MCF 10A (cell line): ENCODE measurements at regions of chr4 and their contacts with region 1.

Region 1: GRCh38 chr4:147866532-147867271 is 134.8 kb downstream of the ARHGAP10 start:
- DNase-seq: peak; percentile 93
- H3K4me3 Mint-ChIP-seq: no peak overlapping the region
- H3K27ac Mint-ChIP-seq: peak overlapping the region; percentile 75
- H3K4me1 Mint-ChIP-seq: no peaks in the 10 kb centered on the region
- H3K27me3 Mint-ChIP-seq: no peaks in the 10 kb centered on the region
- CTCF ChIP-seq: peak; percentile 98

Region 2: GRCh38 chr4:147111033-147111367 is 755.7 kb before region 1 on chr4:
- CTCF ChIA-PET with region 1: no interaction called
- POLR2A ChIA-PET with region 1: no interaction called
- intact Hi-C with region 1: loop called (anchors 5 kb)
- DNase-seq: no peak
- H3K4me3 Mint-ChIP-seq: no peak overlapping the region
- H3K27ac Mint-ChIP-seq: no peak overlapping the region
- H3K4me1 Mint-ChIP-seq: no peaks in the 10 kb centered on the region
- H3K27me3 Mint-ChIP-seq: no peaks in the 10 kb centered on the region
- CTCF ChIP-seq: peak; percentile 8

Region 3: DNA sequence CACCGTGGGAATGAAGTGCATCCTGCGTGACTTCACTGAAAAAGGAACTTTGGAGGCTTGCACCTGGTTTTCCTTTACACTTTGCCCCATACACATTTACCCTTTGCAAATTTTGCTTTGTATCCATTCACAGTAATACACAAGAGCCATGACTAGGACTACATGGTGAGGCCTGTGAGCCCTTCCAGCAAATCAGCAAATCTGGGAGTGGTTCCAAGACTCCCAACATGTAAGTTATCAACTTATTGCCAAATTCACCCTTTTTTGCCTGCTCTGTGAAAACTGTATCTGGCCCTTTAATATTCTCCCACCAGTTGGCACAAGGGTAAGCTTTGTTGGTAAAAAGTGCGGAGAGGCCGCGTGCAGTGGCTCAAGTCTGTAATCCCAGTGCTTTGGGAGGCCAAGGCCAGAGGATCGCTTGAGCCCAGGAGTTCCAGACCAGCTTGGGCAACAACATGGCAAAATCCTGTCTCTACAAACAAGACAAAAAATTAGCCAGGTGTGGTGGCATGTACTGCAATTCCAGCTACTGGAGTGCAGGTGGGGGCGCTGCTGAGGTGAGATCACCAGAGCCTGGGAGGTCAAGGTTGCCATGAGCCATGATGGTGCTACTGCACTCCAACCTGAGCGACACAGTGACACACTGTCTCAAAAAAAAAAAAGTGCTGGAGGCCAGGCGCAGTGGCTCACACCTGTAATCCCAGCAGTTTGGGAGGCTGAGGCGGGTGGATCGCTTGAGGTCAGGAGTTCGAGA is 187.7 kb before region 1 on chr4:
- CTCF ChIA-PET with region 1: interaction called, 19 read pairs
- POLR2A ChIA-PET with region 1: interaction called, 16 read pairs
- intact Hi-C with region 1: no loop called
- DNase-seq: peak; percentile 11
- H3K4me3 Mint-ChIP-seq: no peak overlapping the region
- H3K27ac Mint-ChIP-seq: no peak overlapping the region
- H3K4me1 Mint-ChIP-seq: peaks cover 11% of the 10 kb centered on the region
- H3K27me3 Mint-ChIP-seq: no peaks in the 10 kb centered on the region
- CTCF ChIP-seq: no peak

Region 4: GRCh38 chr4:147714575-147715401 is 151.9 kb before region 1 on chr4:
- CTCF ChIA-PET with region 1: interaction called, 247 read pairs
- POLR2A ChIA-PET with region 1: interaction called, 12 read pairs
- intact Hi-C with region 1: no loop called
- DNase-seq: peak; percentile 68
- H3K4me3 Mint-ChIP-seq: no peak overlapping the region
- H3K27ac Mint-ChIP-seq: no peak overlapping the region
- H3K4me1 Mint-ChIP-seq: no peaks in the 10 kb centered on the region
- H3K27me3 Mint-ChIP-seq: no peaks in the 10 kb centered on the region
- CTCF ChIP-seq: no peak

Region 5: GRCh38 chr4:147768113-147768512 is 98.6 kb before region 1 on chr4:
- CTCF ChIA-PET with region 1: interaction called, 24 read pairs
- POLR2A ChIA-PET with region 1: no interaction called
- intact Hi-C with region 1: no loop called
- DNase-seq: peak; percentile 57
- H3K4me3 Mint-ChIP-seq: no peak overlapping the region
- H3K27ac Mint-ChIP-seq: no peak overlapping the region
- H3K4me1 Mint-ChIP-seq: peaks cover 34% of the 10 kb centered on the region
- H3K27me3 Mint-ChIP-seq: no peaks in the 10 kb centered on the region
- CTCF ChIP-seq: no peak

Region 6: DNA sequence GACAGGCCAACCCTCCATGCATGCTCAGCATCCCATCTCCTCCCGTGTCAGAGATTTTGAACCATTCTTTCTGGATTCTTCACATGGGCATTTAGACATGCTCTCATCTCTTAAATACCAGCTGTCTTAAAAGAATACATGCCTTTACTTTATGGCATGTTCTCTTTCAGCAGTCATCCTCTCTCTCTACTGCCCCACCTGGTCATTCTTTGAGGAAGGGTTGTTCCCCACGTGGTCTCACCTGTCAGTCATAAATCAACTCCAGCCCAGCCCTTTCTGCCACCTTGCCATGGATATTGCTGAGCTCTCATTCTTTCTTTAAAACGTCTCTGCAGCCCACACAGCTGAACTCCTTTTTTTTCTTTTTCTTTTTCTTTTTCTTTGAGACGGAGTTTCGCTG is 23.5 kb before region 1 on chr4:
- CTCF ChIA-PET with region 1: interaction called, 126 read pairs
- POLR2A ChIA-PET with region 1: interaction called, 3 read pairs
- intact Hi-C with region 1: no loop called
- DNase-seq: peak; percentile 66
- H3K4me3 Mint-ChIP-seq: no peak overlapping the region
- H3K27ac Mint-ChIP-seq: no peak overlapping the region
- H3K4me1 Mint-ChIP-seq: no peaks in the 10 kb centered on the region
- H3K27me3 Mint-ChIP-seq: no peaks in the 10 kb centered on the region
- CTCF ChIP-seq: peak; percentile 18

Region 7: GRCh38 chr4:147991543-147992283 is 125.0 kb after region 1 on chr4:
- CTCF ChIA-PET with region 1: no interaction called
- POLR2A ChIA-PET with region 1: no interaction called
- intact Hi-C with region 1: no loop called
- DNase-seq: no peak
- H3K4me3 Mint-ChIP-seq: no peak overlapping the region
- H3K27ac Mint-ChIP-seq: no peak overlapping the region
- H3K4me1 Mint-ChIP-seq: no peaks in the 10 kb centered on the region
- H3K27me3 Mint-ChIP-seq: no peaks in the 10 kb centered on the region
- CTCF ChIP-seq: no peak

Region 8: DNA sequence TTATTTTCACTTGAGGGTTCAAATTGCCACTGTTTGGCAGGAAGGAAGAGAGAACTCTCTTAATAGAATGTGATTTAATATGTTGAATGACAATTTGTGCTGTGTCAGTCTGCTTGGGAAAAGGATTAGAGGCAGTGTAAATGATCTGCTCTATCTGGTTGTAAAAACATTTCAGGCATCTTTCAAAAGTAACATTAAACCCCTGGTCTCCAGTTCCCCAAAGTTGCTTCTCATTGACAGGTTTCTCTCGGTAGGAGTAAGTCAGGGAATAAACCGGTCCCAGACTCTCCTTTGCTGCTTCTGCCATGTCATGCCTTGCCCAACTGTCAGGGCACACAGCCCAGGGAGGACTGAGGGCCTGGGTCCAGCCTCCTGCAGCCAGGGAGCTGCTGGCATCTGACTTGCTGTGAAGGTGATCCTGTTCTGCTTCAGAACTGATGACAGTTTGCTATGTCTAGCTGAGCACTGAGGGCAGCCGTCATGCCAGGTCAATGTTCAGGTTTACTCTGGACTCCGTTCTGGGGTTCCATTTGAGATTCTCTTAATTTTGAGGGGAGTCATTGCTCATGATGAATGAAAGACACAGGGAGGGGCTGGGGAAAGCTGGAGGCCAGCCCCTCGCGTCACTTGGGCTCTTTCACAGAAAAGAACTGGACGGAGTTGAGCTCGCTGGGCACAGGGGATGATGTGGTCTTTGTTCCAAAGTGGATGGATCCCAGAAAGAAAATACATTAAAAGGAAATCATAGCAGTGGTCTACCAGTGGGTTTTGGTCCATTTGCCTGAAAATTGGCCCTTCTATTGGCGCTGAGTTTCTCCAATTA is 177.6 kb after region 1 on chr4:
- CTCF ChIA-PET with region 1: no interaction called
- POLR2A ChIA-PET with region 1: no interaction called
- intact Hi-C with region 1: no loop called
- DNase-seq: no peak
- H3K4me3 Mint-ChIP-seq: no peak overlapping the region
- H3K27ac Mint-ChIP-seq: no peak overlapping the region
- H3K4me1 Mint-ChIP-seq: no peaks in the 10 kb centered on the region
- H3K27me3 Mint-ChIP-seq: no peaks in the 10 kb centered on the region
- CTCF ChIP-seq: no peak

Region 9: GRCh38 chr4:148065075-148065474 is 198.4 kb after region 1 on chr4:
- CTCF ChIA-PET with region 1: no interaction called
- POLR2A ChIA-PET with region 1: no interaction called
- intact Hi-C with region 1: no loop called
- DNase-seq: peak; percentile 22
- H3K4me3 Mint-ChIP-seq: no peak overlapping the region
- H3K27ac Mint-ChIP-seq: no peak overlapping the region
- H3K4me1 Mint-ChIP-seq: peaks cover 11% of the 10 kb centered on the region
- H3K27me3 Mint-ChIP-seq: no peaks in the 10 kb centered on the region
- CTCF ChIP-seq: no peak